MCF 10A (cell line): ENCODE measurements at regions of chr14 and their contacts with region 1.

Region 1: DNA sequence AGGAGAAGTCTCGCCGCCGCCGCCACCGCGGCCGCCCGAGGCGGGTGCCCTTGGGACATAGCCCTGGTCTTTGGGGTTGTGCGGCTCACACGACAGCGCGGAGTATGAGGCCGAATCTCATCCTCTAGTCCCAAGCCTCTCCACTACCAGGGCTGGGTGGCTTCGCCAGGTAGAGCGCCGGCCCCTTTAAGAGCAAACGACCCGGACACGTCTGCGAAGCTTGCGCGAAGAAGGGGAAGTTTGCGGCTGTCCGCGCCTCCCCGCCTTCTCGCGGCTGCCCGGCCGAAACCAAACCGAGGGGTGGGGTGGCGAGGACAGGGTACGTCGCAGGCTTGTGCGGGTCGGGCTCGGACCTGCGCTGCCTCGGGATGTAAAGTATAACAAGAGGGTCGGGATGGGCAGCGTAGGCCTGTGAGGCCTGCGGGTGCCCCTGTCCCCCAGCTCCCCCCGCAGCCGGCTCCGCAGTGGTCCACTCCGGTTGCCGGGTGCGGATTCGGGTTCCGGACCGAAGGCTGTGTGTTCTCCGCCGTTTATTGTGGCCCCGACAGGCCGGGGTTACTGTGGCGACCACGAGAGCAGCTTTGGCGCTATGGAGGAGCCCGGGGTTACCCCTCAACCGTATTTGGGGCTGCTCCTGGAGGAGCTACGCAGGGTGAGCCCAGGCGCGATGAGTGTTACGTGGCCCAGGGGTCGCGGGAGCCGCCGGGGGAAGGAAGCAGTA is 33.3 kb downstream of the MIA2 start:
- DNase-seq: peak; percentile 89
- H3K4me3 Mint-ChIP-seq: peak overlapping the region; percentile 96
- H3K27ac Mint-ChIP-seq: peak overlapping the region; percentile 98
- H3K4me1 Mint-ChIP-seq: peaks cover 29% of the 10 kb centered on the region
- H3K27me3 Mint-ChIP-seq: no peaks in the 10 kb centered on the region
- CTCF ChIP-seq: no peak

Region 2: GRCh38 chr14:39102969-39103957 is 163.8 kb before region 1 on chr14 and contains the start of gene SEC23A:
- CTCF ChIA-PET with region 1: no interaction called
- POLR2A ChIA-PET with region 1: interaction called, 16 read pairs
- intact Hi-C with region 1: no loop called
- DNase-seq: peak; percentile 88
- H3K4me3 Mint-ChIP-seq: peak within 1 kb of the TSS; percentile 95
- H3K27ac Mint-ChIP-seq: peak within 1 kb of the TSS; percentile 98
- H3K4me1 Mint-ChIP-seq: peaks cover 16% of the 10 kb centered on the region
- H3K27me3 Mint-ChIP-seq: no peaks in the 10 kb centered on the region
- CTCF ChIP-seq: no peak
- total RNA-seq, gene SEC23A: 79.3 and 82.4 TPM in 2 replicates

Region 3: DNA sequence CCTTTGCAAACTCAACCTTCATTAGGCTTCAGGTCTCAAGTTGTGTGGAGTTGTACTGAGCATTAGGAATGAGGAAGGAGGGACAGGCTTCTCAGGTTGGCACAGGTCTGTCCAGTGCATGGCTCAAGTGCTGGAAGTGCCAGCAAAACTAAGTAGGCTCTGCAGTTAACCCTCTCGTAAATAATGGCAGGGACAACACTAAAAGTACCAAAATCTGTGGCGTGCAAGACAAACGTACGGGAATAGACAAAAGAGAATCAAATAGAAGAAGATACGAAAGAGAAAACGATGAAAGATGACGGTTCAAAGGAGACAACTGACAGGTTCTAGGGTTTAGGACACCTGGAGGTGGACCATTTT is 97.5 kb before region 1 on chr14:
- CTCF ChIA-PET with region 1: interaction called, 3 read pairs
- POLR2A ChIA-PET with region 1: interaction called, 144 read pairs
- intact Hi-C with region 1: loop called (anchors 1 kb)
- DNase-seq: peak; percentile 31
- H3K4me3 Mint-ChIP-seq: peak overlapping the region; percentile 83
- H3K27ac Mint-ChIP-seq: peak overlapping the region; percentile 93
- H3K4me1 Mint-ChIP-seq: peaks cover 14% of the 10 kb centered on the region
- H3K27me3 Mint-ChIP-seq: no peaks in the 10 kb centered on the region
- CTCF ChIP-seq: no peak

Region 4: GRCh38 chr14:39184628-39185255 is 82.3 kb before region 1 on chr14:
- CTCF ChIA-PET with region 1: interaction called, 3 read pairs
- POLR2A ChIA-PET with region 1: interaction called, 29 read pairs
- intact Hi-C with region 1: loop called (anchors 5 kb)
- DNase-seq: no peak
- H3K4me3 Mint-ChIP-seq: no peak overlapping the region
- H3K27ac Mint-ChIP-seq: no peak overlapping the region
- H3K4me1 Mint-ChIP-seq: peaks cover 19% of the 10 kb centered on the region
- H3K27me3 Mint-ChIP-seq: no peaks in the 10 kb centered on the region
- CTCF ChIP-seq: no peak

Region 5: DNA sequence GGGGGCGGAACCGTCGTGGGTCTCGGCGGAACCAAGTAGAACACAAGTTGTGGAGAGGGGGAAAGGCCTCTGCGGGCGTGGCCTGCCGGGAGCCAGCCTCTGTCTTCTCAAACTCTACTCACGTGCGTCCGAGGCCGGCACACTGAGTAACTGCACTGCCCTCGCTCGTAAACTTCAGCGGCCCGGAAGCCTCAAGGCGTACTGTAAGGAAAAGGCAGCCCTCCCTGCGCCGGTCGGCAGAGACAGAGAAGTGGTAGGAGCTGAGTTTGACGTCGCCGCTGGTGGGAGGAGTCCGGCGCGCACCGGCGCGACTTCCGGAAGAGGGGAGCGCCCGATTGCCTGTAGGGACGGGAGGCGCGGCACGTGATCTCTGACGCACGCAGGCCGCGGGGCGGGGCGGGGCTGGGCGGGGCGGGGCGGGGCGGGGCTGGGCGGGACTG is 165.2 kb after region 1 on chr14 and contains the start of gene FBXO33:
- CTCF ChIA-PET with region 1: interaction called, 3 read pairs
- POLR2A ChIA-PET with region 1: interaction called, 47 read pairs
- intact Hi-C with region 1: no loop called
- DNase-seq: peak; percentile 95
- H3K4me3 Mint-ChIP-seq: peak within 1 kb of the TSS; percentile 94
- H3K27ac Mint-ChIP-seq: peak within 1 kb of the TSS; percentile 100
- H3K4me1 Mint-ChIP-seq: peaks cover 24% of the 10 kb centered on the region
- H3K27me3 Mint-ChIP-seq: no peaks in the 10 kb centered on the region
- CTCF ChIP-seq: no peak
- total RNA-seq, gene FBXO33: 3.9 and 5.6 TPM in 2 replicates